Activated CD4-positive, alpha-beta T cell treated with anti-CD3 and anti-CD28 coated beads for 36 hours (primary cell): ENCODE measurements at regions of chr19 and their contacts with region 1.

Region 1: GRCh38 chr19:4867534-4868285 is at the start of gene PLIN3:
- DNase-seq: peak; percentile 98
- ATAC-seq: peak; percentile 95
- H3K4me3 Mint-ChIP-seq: peak within 1 kb of the TSS; percentile 73
- H3K27ac Mint-ChIP-seq: peak within 1 kb of the TSS; percentile 63
- H3K4me1 Mint-ChIP-seq: peaks cover 20% of the 10 kb centered on the region
- H3K27me3 Mint-ChIP-seq: peaks cover 2% of the 10 kb centered on the region
- total RNA-seq, gene PLIN3: 26.9 to 27.5 TPM

Region 2: DNA sequence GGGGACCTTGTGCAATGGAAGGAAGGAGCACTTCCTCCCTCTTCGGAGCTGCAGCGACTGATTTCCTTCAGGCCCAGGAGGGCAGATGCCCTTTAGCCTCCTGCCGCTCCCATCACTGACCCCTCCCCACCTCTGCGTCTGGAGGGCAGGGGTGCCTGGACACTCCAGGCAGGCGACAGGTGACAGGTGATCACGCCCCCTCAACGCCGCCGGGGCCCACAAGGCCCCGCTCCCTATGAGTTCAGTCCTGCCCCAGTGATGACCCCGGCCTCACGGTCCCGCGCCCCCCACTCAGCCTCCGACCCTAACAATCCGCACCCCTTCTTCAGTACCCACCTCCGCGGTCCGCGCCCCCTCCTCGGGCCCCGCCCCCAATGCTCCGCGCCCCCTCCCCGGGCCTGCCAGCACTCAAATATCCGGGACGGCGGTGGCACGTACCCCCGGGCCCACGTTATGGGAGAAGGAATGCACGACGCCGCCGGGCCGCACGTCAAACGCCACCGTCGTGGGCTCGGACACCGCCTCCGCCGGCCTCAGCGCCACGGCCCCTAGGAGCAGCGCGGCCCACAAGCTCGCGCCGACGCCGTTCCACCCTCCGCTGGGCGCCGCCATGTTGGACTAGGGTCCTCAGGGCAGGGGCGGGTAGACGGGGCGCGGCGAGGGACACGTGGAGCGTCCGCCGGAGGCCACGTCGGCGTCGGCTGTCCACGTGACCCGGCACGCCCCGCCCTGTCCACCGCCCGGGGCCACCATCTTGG is 197.8 kb before region 1 on chr19 and contains the start of gene MYDGF:
- CTCF ChIA-PET with region 1: no interaction called
- POLR2A ChIA-PET with region 1: no interaction called
- intact Hi-C with region 1: loop called in 1 of 2 experiments (anchors 1 kb)
- DNase-seq: peak; percentile 97
- ATAC-seq: peak; percentile 99
- H3K4me3 Mint-ChIP-seq: peak within 1 kb of the TSS; percentile 85
- H3K27ac Mint-ChIP-seq: peak within 1 kb of the TSS; percentile 75
- H3K4me1 Mint-ChIP-seq: peaks cover 18% of the 10 kb centered on the region
- H3K27me3 Mint-ChIP-seq: no peaks in the 10 kb centered on the region
- total RNA-seq, gene MYDGF: 34.7 to 53.8 TPM

Region 3: DNA sequence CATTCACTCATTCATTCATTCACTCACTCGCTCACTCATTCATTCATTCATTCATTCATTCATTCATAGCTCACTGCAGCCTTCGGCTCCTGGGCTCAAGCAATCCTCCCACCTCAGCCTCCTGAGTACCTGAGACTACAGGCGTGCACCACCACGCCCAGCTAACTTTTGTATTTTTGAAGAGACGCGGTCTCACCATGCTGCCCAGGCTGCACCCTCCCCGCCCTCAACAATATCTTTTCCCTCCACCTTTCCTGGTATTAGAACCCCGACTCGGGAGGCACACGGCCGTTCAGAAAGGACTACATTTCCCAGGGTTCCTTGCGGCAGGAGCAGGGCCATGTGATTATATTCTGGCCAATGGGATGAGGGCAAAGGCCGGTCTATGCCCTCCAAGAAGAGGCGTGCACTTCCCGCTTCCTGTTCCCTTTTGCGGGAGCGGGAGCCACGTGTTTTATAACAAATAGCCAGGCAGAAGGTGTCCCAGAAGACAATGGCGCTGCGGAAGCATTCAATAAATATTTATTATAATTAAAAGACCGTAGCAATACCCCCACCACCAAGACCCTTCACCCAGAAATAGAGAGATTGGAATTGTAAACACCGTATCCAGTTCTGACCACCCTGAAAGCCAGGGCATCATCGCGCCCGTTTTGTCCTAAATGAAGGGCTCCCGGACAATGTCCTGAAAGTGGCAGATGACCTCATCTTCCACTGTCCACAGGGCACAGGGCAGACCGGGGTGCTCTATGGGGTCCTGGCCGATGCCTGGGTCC is 52.1 kb before region 1 on chr19:
- CTCF ChIA-PET with region 1: interaction called, 10 read pairs
- POLR2A ChIA-PET with region 1: interaction called, 3 read pairs
- intact Hi-C with region 1: no loop called
- DNase-seq: peak; percentile 84
- ATAC-seq: peak; percentile 87
- H3K4me3 Mint-ChIP-seq: peak overlapping the region; percentile 55
- H3K27ac Mint-ChIP-seq: peak overlapping the region; percentile 77
- H3K4me1 Mint-ChIP-seq: peaks cover 26% of the 10 kb centered on the region
- H3K27me3 Mint-ChIP-seq: no peaks in the 10 kb centered on the region

Region 4: GRCh38 chr19:4851551-4852290 is 16.0 kb before region 1 on chr19:
- CTCF ChIA-PET with region 1: interaction called, 10 read pairs
- POLR2A ChIA-PET with region 1: no interaction called
- intact Hi-C with region 1: no loop called
- DNase-seq: peak; percentile 86
- ATAC-seq: peak; percentile 89
- H3K4me3 Mint-ChIP-seq: no peak overlapping the region
- H3K27ac Mint-ChIP-seq: no peak overlapping the region
- H3K4me1 Mint-ChIP-seq: peaks cover 2% of the 10 kb centered on the region
- H3K27me3 Mint-ChIP-seq: no peaks in the 10 kb centered on the region

Region 5: DNA sequence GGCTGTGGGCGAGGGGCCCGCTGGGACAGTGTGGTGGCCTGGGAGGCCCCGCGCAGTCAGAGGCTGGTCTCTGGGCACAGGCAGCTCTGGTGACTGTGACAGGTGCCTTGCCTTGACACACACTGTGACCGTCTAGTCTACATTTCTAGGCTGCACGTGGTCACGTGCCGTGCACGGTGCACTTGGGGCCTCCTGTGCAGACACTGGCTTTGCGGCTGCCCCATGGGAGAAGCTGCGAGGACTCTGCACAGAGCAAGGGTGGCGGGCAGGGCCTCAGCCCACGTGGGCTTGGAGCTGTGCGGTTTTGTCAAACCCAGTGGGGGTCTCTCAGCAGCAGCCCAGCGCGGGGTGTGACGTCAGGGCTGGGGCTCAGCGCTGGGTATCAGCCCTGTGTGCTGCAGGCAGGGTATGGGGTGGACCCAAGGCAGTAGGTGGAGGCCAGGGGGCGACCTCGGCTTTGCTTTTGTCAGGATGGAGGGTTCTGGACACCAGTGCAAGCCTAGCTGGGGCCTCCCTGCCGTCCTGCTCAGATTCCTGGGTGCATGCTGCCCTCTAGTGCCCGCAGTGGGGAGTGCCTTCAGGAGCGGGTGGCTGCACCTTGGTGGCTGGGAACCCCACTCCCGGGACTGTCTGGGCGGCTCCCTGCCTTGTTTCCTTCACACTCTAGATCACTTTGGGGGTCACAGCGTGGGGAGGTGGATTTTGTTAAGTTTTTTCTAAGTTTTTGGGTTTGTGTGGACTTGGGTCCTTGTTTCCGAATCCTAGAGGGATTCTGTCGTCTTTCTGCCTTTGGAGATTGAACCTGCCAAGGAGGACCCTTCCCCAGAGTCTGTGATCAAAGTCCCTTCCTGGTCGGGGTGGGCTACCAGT is 163.8 kb after region 1 on chr19:
- CTCF ChIA-PET with region 1: interaction called, 24 read pairs
- POLR2A ChIA-PET with region 1: no interaction called
- intact Hi-C with region 1: loop called (anchors 1 kb)
- DNase-seq: peak; percentile 89
- ATAC-seq: peak; percentile 94
- H3K4me3 Mint-ChIP-seq: no peak overlapping the region
- H3K27ac Mint-ChIP-seq: no peak overlapping the region
- H3K4me1 Mint-ChIP-seq: peaks cover 8% of the 10 kb centered on the region
- H3K27me3 Mint-ChIP-seq: no peaks in the 10 kb centered on the region